Heart left ventricle (tissue), 16 donors: ENCODE measurements at regions of chr5 and their contacts with region 1.

Region 1: DNA sequence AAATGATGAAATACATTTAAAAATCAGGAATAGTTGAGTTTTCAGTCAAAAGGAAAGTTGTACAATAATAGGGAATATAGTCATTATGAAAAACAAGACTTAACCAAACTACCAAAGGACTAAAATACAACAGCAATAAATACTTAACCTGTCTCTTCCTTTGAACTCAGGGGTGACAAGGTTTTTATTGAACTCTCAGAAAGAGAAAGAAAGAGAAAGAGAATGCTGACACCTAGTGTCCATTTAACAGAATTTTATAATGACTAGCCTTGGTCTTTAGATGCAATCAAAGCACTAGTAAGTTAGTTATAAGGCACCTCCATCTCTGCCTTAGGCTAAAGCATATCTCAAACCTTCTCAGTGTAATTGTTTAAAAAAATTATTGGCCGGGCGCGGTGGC is 47.5 kb downstream of the UIMC1 start:
- DNase-seq: no peak
- ATAC-seq: no peak
- H3K4me3 ChIP-seq: no peak overlapping the region
- H3K27ac ChIP-seq: no peak overlapping the region
- H3K4me1 ChIP-seq: peaks cover 0 to 11% (median 2%) of the 10 kb centered on the region in 12 donors
- H3K27me3 ChIP-seq: no peaks in the 10 kb centered on the region
- CTCF ChIP-seq: peak; percentile 30 to 56 (median 46)
- POLR2A ChIP-seq: no peak

Region 2: GRCh38 chr5:176817841-176818377 is 141.1 kb before region 1 on chr5:
- intact Hi-C with region 1: loop called in 1 of 10 experiments (anchors 5 kb)
- DNase-seq: peak in 1 of 5 donors; percentile 22
- ATAC-seq: peak in 1 of 4 donors; percentile 34
- H3K4me3 ChIP-seq: peak overlapping the region in 11 of 12 donors; percentile 10 to 51 (median 40)
- H3K27ac ChIP-seq: no peak overlapping the region
- H3K4me1 ChIP-seq: peaks cover 0 to 15% (median 3%) of the 10 kb centered on the region in 12 donors
- H3K27me3 ChIP-seq: peaks cover 29 to 79% (median 45%) of the 10 kb centered on the region in 9 donors
- CTCF ChIP-seq: peak in 3 of 12 donors; percentile 18 to 21 (median 20)
- POLR2A ChIP-seq: no peak

Region 3: GRCh38 chr5:176994460-176995121 is 35.5 kb after region 1 on chr5:
- intact Hi-C with region 1: no loop called
- DNase-seq: peak in 4 of 5 donors; percentile 26 to 54 (median 38)
- ATAC-seq: peak; percentile 75 to 81 (median 78)
- H3K4me3 ChIP-seq: no peak overlapping the region
- H3K27ac ChIP-seq: peak overlapping the region; percentile 12 to 81 (median 64)
- H3K4me1 ChIP-seq: peaks cover 0 to 28% (median 8%) of the 10 kb centered on the region in 12 donors
- H3K27me3 ChIP-seq: no peaks in the 10 kb centered on the region
- CTCF ChIP-seq: no peak
- POLR2A ChIP-seq: no peak